BJ (cell line): ENCODE measurements at regions of chr16 and their contacts with region 1.

Region 1: DNA sequence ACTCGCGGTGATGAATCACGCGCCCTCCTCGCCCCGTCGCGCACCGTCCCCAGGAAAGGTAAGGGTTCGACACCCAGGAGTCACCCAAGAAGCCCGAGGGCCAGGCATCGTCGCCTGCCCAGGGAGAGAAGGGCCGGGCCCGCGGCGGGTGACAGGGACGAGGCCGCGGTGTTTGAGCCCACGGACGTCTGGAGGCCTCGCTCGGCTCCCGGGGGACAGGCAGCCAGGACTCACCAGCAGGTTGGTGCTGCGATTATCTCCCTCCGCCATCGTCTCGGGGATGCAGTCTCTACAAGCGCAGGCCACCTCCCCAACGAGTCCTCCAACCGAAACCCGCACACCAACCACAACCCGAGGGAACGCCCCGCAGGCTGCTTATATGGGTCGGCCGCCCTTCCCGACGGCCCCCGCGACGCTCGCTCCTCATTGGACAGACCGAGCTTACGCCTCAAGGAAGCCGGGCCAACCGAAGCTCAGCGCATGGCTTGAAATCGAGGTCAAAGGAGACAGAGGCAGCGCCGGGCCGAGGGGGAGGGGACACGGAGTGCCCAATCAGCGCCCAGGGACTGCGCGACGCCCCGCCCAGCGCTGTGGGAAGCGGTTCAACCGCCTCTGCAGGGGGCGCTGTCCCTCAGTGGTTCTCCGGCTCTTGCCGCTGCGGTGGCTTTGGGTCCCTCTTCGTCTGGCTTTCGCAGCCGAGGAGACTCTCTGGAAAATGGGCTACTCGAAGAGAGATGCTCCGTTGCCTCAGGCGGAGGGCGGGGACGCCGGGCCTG is at the start of gene ARL6IP1:
- DNase-seq: peak; percentile 97
- H3K4me3 ChIP-seq: peak within 1 kb of the TSS; percentile 93
- H3K27me3 ChIP-seq: no peaks in the 10 kb centered on the region
- CTCF ChIP-seq: peak; percentile 94
- polyA plus RNA-seq, gene ARL6IP1: 178 and 258 TPM in 2 replicates

Region 2: GRCh38 chr16:18789850-18790724 is 11.3 kb before region 1 on chr16 and contains the start of gene RPS15A:
- CTCF ChIA-PET with region 1: interaction called, 44 read pairs
- POLR2A ChIA-PET with region 1: interaction called, 31 read pairs
- DNase-seq: peak; percentile 71
- H3K4me3 ChIP-seq: peak within 1 kb of the TSS; percentile 82
- H3K27me3 ChIP-seq: no peaks in the 10 kb centered on the region
- CTCF ChIP-seq: no peak
- polyA plus RNA-seq, gene RPS15A: 2,792 and 4,325 TPM in 2 replicates

Region 3: DNA sequence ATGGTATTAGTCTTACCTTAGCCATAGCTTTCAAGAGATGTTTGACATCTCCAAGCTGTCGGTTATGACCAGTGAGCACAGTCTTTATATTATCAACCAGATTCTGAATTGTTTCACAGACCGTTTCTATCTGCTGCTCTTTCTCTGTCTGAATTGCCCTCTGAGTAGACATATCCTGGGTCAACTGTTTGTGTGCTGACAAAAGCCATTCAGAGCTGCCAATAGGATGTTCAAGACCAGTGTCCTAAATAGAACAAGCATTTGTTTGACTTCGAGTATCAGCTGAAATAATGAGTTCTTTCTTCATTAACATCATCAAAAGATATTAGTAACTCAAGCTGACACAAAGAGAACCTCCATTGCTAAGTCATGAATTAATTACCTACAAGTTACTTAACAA is 14.9 kb after region 1 on chr16:
- CTCF ChIA-PET with region 1: interaction called, 20 read pairs
- POLR2A ChIA-PET with region 1: no interaction called
- DNase-seq: no peak
- H3K4me3 ChIP-seq: no peak overlapping the region
- H3K27me3 ChIP-seq: no peaks in the 10 kb centered on the region
- CTCF ChIP-seq: no peak

Region 4: GRCh38 chr16:18829251-18829650 is 27.9 kb after region 1 on chr16:
- CTCF ChIA-PET with region 1: interaction called, 11 read pairs
- POLR2A ChIA-PET with region 1: no interaction called
- DNase-seq: no peak
- H3K4me3 ChIP-seq: no peak overlapping the region
- H3K27me3 ChIP-seq: no peaks in the 10 kb centered on the region
- CTCF ChIP-seq: no peak

Region 5: GRCh38 chr16:19138601-19139000 is 337.2 kb after region 1 on chr16:
- CTCF ChIA-PET with region 1: no interaction called
- POLR2A ChIA-PET with region 1: no interaction called
- DNase-seq: peak; percentile 80
- H3K4me3 ChIP-seq: no peak overlapping the region
- H3K27me3 ChIP-seq: no peaks in the 10 kb centered on the region; the same call in 1 of the 2 replicates
- CTCF ChIP-seq: no peak